ENCODE measurements at regions of chr5 and their contacts with region 1.

Region 1: GRCh38 chr5:157718519-157718918 is 12.7 kb upstream of the THG1L start:
- DNase-seq: peak; percentile 55 to 56
- ATAC-seq: peak; percentile 85 to 95; a peak in 5 of 6 replicates
- H3K4me3 ChIP-seq: no peak overlapping the region
- H3K27ac ChIP-seq: peak overlapping the region in 1 of 2 experiments; percentile 19; a peak in 1 of 6 replicates
- H3K4me1 ChIP-seq: no peaks in the 10 kb centered on the region
- CTCF ChIP-seq: peak; percentile 71
- EP300 ChIP-seq: no peak
- POLR2A ChIP-seq: no peak
- RAD21 ChIP-seq: peak; percentile 84 to 86

Region 2: DNA sequence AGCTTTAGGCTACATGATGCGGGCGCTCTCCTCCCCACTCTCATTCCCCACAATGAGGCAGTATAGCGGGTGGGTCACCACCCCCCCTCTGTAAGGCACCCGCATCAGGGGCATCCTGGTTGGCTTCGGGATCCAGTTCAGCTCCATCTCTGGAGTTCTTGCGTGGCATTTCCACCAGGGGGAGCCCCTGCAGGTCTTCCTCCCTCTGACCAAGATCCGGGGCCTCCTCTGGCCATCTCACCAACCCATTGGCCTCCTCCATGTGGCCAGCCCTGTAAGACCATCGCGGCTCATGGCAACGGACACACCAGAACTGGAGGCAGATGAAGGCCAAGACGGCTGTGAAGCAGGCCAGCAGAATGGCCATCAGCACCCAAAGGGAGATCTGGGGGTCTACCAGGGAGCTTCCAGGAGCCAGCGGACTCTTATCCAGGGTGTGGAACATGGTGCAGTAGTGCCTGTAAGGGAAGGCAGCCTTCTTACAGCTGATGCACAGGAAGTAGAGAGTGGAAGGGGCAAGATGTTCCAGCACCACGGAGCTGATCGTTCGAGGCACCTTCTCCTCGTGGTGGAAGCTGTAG is 375.6 kb before region 1 on chr5:
- CTCF ChIA-PET with region 1: interaction called, 25 read pairs
- POLR2A ChIA-PET with region 1: no interaction called
- DNase-seq: peak; percentile 56 to 71
- ATAC-seq: peak; percentile 75 to 97; a peak in 5 of 6 replicates
- H3K4me3 ChIP-seq: no peak overlapping the region
- H3K27ac ChIP-seq: no peak overlapping the region
- H3K4me1 ChIP-seq: no peaks in the 10 kb centered on the region
- CTCF ChIP-seq: peak; percentile 52
- EP300 ChIP-seq: no peak
- POLR2A ChIP-seq: no peak
- RAD21 ChIP-seq: peak; percentile 53 to 57

Region 3: GRCh38 chr5:157354800-157355199 is 363.7 kb before region 1 on chr5:
- CTCF ChIA-PET with region 1: interaction called, 11 read pairs
- POLR2A ChIA-PET with region 1: no interaction called
- DNase-seq: peak; percentile 19 to 21
- ATAC-seq: peak; percentile 56 to 86; a peak in 4 of 6 replicates
- H3K4me3 ChIP-seq: no peak overlapping the region
- H3K27ac ChIP-seq: no peak overlapping the region
- H3K4me1 ChIP-seq: no peaks in the 10 kb centered on the region
- CTCF ChIP-seq: peak; percentile 46
- EP300 ChIP-seq: no peak
- POLR2A ChIP-seq: no peak
- RAD21 ChIP-seq: peak in 1 of 2 experiments; percentile 19; a peak in 1 of 5 replicates

Region 4: GRCh38 chr5:157366741-157367674 is 351.5 kb before region 1 on chr5:
- CTCF ChIA-PET with region 1: interaction called, 10 read pairs
- POLR2A ChIA-PET with region 1: no interaction called
- DNase-seq: peak; percentile 52 to 74
- ATAC-seq: peak; percentile 76 to 93
- H3K4me3 ChIP-seq: no peak overlapping the region
- H3K27ac ChIP-seq: peak overlapping the region; percentile 1 to 64; a peak in 3 of 6 replicates
- H3K4me1 ChIP-seq: peaks cover 18% of the 10 kb centered on the region
- CTCF ChIP-seq: peak; percentile 59
- EP300 ChIP-seq: no peak
- POLR2A ChIP-seq: no peak
- RAD21 ChIP-seq: peak; percentile 87 to 96

Region 5: GRCh38 chr5:157670662-157671591 is 47.6 kb before region 1 on chr5 and contains the start of gene C5orf52:
- CTCF ChIA-PET with region 1: interaction called, 58 read pairs
- POLR2A ChIA-PET with region 1: no interaction called
- DNase-seq: peak; percentile 18 to 35
- ATAC-seq: peak; percentile 15 to 16; a peak in 2 of 6 replicates
- H3K4me3 ChIP-seq: peak within 1 kb of the TSS; percentile 30
- H3K27ac ChIP-seq: peak within 1 kb of the TSS; percentile 45 to 62; a peak in 5 of 6 replicates
- H3K4me1 ChIP-seq: peaks cover 9% of the 10 kb centered on the region
- CTCF ChIP-seq: no peak
- EP300 ChIP-seq: no peak
- POLR2A ChIP-seq: no peak
- RAD21 ChIP-seq: no peak
- polyA plus RNA-seq, gene C5orf52: not detected in 2 replicates

Region 6: GRCh38 chr5:157731272-157732129 is 13.0 kb after region 1 on chr5 and contains the start of gene THG1L:
- CTCF ChIA-PET with region 1: interaction called, 14 read pairs
- POLR2A ChIA-PET with region 1: interaction called, 7 read pairs
- DNase-seq: peak; percentile 98 to 99
- ATAC-seq: peak; percentile 99 to 100
- H3K4me3 ChIP-seq: peak within 1 kb of the TSS; percentile 52
- H3K27ac ChIP-seq: peak within 1 kb of the TSS; percentile 83 to 96
- H3K4me1 ChIP-seq: peaks cover 9% of the 10 kb centered on the region; the same call in 1 of the 3 replicates
- CTCF ChIP-seq: no peak
- EP300 ChIP-seq: no peak
- POLR2A ChIP-seq: peak; percentile 88
- RAD21 ChIP-seq: no peak
- polyA plus RNA-seq, gene THG1L: 31.9 and 45.6 TPM in 2 replicates